Caco-2 (cell line): ENCODE measurements at regions of chr2 and their contacts with region 1.

Region 1: DNA sequence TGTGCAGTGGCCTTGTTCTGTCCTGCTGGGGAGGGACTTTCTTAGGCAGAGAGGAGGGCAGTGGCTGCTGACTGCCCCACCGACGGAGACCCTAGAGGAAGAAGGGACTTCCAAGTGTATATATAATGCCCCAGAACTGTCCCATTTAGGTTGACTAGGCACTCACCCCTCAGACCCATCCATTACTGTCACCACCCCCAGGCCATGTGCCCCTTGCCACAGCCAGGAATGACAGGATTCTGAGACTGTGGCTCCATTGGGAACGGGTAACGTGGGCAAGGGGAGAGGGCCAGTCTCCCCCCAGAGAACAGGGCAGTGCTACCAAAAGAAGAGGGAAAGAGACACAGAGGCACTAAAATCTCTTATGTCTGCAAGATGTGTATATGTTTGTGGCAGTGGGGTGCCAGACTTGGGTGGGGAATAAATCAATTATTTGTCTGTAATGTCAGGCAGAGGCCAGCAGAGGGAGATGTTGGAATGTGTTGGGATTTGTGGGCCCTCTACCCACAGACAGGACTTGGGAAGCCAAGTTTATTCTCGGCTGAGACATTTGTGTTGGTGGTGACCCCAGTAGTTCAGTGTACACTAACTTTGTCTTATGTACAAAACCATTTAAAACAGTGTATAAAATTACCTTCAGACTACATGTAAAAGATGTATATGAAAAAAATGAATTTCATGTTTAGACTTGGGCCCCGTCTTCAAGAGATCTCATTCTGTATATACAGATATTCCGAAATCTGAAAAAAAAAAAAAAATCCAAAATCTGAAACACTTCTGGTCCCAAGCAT is 24.0 kb upstream of the TMEM37 start:
- DNase-seq: peak; percentile 59 to 73
- H3K4me3 ChIP-seq: no peak overlapping the region
- H3K4me3 Mint-ChIP-seq: no peak overlapping the region
- H3K27ac Mint-ChIP-seq: no peak overlapping the region
- H3K4me1 ChIP-seq: peaks cover 6% of the 10 kb centered on the region
- H3K4me1 Mint-ChIP-seq: peaks cover 10% of the 10 kb centered on the region
- H3K27me3 ChIP-seq: no peaks in the 10 kb centered on the region
- H3K27me3 Mint-ChIP-seq: no peaks in the 10 kb centered on the region
- CTCF ChIP-seq: peak; percentile 76 to 94

Region 2: DNA sequence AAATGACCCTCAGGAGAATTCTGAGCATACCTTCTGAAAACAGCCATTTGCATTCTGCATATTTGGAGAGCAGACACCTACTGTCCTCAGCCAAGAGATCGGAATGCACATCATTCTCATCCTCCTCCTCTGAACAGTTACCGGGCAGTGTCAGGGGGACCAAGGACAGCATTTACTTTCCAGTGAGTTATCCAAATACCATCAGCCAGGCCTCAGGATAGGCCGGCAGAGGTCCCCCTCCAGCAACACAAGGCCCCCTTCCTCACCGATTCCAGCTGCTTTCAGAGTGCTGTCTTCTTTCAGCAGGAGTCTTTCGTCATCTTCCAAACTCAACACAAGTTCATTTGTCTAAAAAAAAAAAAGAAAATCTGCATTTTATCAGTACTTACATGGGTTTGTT is 96.3 kb before region 1 on chr2:
- CTCF ChIA-PET with region 1: no interaction called
- POLR2A ChIA-PET with region 1: no interaction called
- intact Hi-C with region 1: loop called (anchors 5 kb)
- DNase-seq: peak in 1 of 2 experiments; percentile 33
- H3K4me3 ChIP-seq: no peak overlapping the region
- H3K4me3 Mint-ChIP-seq: no peak overlapping the region
- H3K27ac Mint-ChIP-seq: no peak overlapping the region
- H3K4me1 ChIP-seq: peaks cover 17% of the 10 kb centered on the region; the same call in 1 of the 2 replicates
- H3K4me1 Mint-ChIP-seq: peaks cover 23% of the 10 kb centered on the region
- H3K27me3 ChIP-seq: no peaks in the 10 kb centered on the region
- H3K27me3 Mint-ChIP-seq: no peaks in the 10 kb centered on the region
- CTCF ChIP-seq: peak in 1 of 2 experiments; percentile 37

Region 3: DNA sequence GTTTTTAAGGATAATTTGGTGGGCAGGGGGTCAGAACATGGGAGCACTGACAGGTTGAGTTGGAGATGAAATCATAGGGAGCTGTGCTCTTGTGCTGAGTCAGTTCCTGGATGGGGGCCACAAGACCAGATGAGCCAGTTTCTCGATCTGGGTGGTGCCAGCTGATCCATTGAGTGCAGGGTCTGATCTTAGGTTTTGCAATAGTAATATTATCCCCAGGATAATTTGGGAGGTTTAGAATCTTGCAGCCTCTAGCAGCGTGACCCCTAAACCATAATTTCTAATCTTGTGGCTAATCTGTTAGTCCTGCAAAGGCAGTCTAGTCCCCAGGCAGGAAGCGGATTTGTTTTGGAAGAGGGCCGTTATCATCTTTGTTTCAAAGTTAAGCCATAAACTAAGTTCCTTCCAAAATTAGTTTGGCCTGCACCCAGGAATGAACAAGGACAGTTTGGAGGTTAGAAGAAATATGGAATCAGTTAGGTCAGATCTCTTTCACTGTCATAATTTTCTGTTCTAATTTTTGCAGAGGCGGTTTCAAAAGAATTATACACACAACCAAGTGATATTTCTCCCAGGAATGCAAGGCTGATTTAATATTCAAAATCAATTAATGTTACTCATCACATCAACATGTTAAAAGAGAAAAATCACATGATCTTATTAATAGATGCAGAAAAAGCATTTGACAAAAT is 17.9 kb before region 1 on chr2:
- CTCF ChIA-PET with region 1: no interaction called
- POLR2A ChIA-PET with region 1: no interaction called
- intact Hi-C with region 1: no loop called
- DNase-seq: no peak
- H3K4me3 ChIP-seq: no peak overlapping the region
- H3K4me3 Mint-ChIP-seq: no peak overlapping the region
- H3K27ac Mint-ChIP-seq: no peak overlapping the region
- H3K4me1 ChIP-seq: peaks cover 9% of the 10 kb centered on the region; the same call in 1 of the 2 replicates
- H3K4me1 Mint-ChIP-seq: peaks cover 7% of the 10 kb centered on the region
- H3K27me3 ChIP-seq: no peaks in the 10 kb centered on the region
- H3K27me3 Mint-ChIP-seq: no peaks in the 10 kb centered on the region
- CTCF ChIP-seq: no peak

Region 4: GRCh38 chr2:119431155-119431975 is 23.7 kb after region 1 on chr2 and contains the start of gene TMEM37:
- CTCF ChIA-PET with region 1: no interaction called
- POLR2A ChIA-PET with region 1: interaction called, 5 read pairs
- intact Hi-C with region 1: loop called (anchors 1 kb)
- DNase-seq: peak; percentile 87 to 90
- H3K4me3 ChIP-seq: peak within 1 kb of the TSS; percentile 63
- H3K4me3 Mint-ChIP-seq: peak within 1 kb of the TSS; percentile 78
- H3K27ac Mint-ChIP-seq: peak within 1 kb of the TSS; percentile 85
- H3K4me1 ChIP-seq: peaks cover 80% of the 10 kb centered on the region
- H3K4me1 Mint-ChIP-seq: peaks cover 53% of the 10 kb centered on the region
- H3K27me3 ChIP-seq: no peaks in the 10 kb centered on the region
- H3K27me3 Mint-ChIP-seq: no peaks in the 10 kb centered on the region
- CTCF ChIP-seq: no peak
- total RNA-seq, gene TMEM37: 13.8 and 15.8 TPM in 2 replicates

Region 5: GRCh38 chr2:119476301-119477021 is 68.8 kb after region 1 on chr2:
- CTCF ChIA-PET with region 1: interaction called, 13 read pairs
- POLR2A ChIA-PET with region 1: no interaction called
- intact Hi-C with region 1: loop called (anchors 1 kb)
- DNase-seq: peak; percentile 76 to 81
- H3K4me3 ChIP-seq: no peak overlapping the region
- H3K4me3 Mint-ChIP-seq: no peak overlapping the region
- H3K27ac Mint-ChIP-seq: peak overlapping the region; percentile 26
- H3K4me1 ChIP-seq: peaks cover 16% of the 10 kb centered on the region
- H3K4me1 Mint-ChIP-seq: peaks cover 8% of the 10 kb centered on the region
- H3K27me3 ChIP-seq: no peaks in the 10 kb centered on the region
- H3K27me3 Mint-ChIP-seq: no peaks in the 10 kb centered on the region
- CTCF ChIP-seq: peak; percentile 94 to 98

Region 6: DNA sequence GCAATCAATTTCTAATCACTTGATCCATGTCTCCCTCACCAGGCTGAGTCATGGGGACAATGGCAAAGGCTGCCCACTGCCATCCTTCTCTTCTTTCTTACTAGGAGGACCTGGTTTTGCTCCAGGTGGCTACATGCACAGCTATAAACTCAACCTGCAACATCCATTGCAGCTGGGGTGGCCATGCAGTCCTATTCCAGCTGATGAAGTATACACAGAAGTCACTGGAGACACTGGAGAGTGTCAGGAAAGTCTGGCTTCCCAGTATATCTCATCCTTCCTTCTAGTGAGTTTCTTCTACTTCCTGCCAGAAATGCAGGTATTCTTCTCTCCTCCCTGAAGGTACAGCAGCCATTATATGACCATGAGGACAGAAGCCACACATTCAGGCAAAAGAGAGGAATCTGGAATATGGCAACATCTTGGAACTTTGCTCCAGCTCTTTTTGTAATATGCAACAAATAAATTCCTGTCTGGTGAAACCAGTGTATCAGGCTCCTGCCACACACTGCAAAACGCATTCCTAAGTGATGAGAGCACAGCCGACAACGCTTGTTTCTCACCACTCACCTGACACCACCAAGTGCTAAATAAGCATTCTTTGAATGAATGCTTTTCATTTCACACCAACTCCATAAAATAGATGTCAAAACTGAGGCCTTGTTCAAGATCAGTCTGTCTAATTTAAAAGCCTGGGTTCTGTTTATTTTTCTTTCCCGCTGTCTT is 84.3 kb after region 1 on chr2:
- CTCF ChIA-PET with region 1: interaction called, 4 read pairs
- POLR2A ChIA-PET with region 1: no interaction called
- intact Hi-C with region 1: loop called (anchors 5 kb)
- DNase-seq: peak; percentile 86 to 92
- H3K4me3 ChIP-seq: no peak overlapping the region
- H3K4me3 Mint-ChIP-seq: peak overlapping the region; percentile 39
- H3K27ac Mint-ChIP-seq: peak overlapping the region; percentile 96
- H3K4me1 ChIP-seq: peaks cover 60% of the 10 kb centered on the region
- H3K4me1 Mint-ChIP-seq: peaks cover 53% of the 10 kb centered on the region
- H3K27me3 ChIP-seq: no peaks in the 10 kb centered on the region
- H3K27me3 Mint-ChIP-seq: no peaks in the 10 kb centered on the region
- CTCF ChIP-seq: no peak

Region 7: DNA sequence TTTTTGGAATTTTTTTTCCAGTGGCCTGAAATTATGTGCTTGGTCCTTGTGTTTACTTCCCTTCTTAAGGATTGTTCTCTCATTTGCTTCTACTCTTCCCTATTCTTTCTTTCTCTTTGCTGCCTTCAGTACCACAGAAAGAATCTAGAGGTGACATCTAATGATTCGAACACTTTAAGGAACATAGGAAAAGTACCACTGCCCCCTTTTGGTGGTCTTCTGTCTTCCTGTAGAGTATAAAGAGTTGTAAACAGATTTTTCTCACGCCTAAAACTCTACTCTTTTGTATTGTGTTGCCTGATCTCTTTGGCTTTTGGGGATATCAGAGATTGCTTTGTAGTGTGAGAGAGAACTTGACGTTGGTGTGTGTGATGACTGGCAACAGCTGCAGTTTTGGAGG is 123.7 kb after region 1 on chr2:
- CTCF ChIA-PET with region 1: interaction called, 3 read pairs
- POLR2A ChIA-PET with region 1: no interaction called
- intact Hi-C with region 1: loop called (anchors 1 kb)
- DNase-seq: peak in 1 of 2 experiments; percentile 29
- H3K4me3 ChIP-seq: no peak overlapping the region
- H3K4me3 Mint-ChIP-seq: no peak overlapping the region
- H3K27ac Mint-ChIP-seq: no peak overlapping the region
- H3K4me1 ChIP-seq: peaks cover 19% of the 10 kb centered on the region
- H3K4me1 Mint-ChIP-seq: peaks cover 18% of the 10 kb centered on the region
- H3K27me3 ChIP-seq: no peaks in the 10 kb centered on the region
- H3K27me3 Mint-ChIP-seq: no peaks in the 10 kb centered on the region
- CTCF ChIP-seq: peak in 1 of 2 experiments; percentile 8

Region 8: GRCh38 chr2:119617455-119617854 is 209.8 kb after region 1 on chr2:
- CTCF ChIA-PET with region 1: no interaction called
- POLR2A ChIA-PET with region 1: no interaction called
- intact Hi-C with region 1: no loop called
- DNase-seq: no peak
- H3K4me3 ChIP-seq: no peak overlapping the region
- H3K4me3 Mint-ChIP-seq: no peak overlapping the region
- H3K27ac Mint-ChIP-seq: no peak overlapping the region
- H3K4me1 ChIP-seq: no peaks in the 10 kb centered on the region; the same call in 1 of the 2 replicates
- H3K4me1 Mint-ChIP-seq: no peaks in the 10 kb centered on the region
- H3K27me3 ChIP-seq: no peaks in the 10 kb centered on the region
- H3K27me3 Mint-ChIP-seq: peaks cover 10% of the 10 kb centered on the region
- CTCF ChIP-seq: no peak

Region 9: DNA sequence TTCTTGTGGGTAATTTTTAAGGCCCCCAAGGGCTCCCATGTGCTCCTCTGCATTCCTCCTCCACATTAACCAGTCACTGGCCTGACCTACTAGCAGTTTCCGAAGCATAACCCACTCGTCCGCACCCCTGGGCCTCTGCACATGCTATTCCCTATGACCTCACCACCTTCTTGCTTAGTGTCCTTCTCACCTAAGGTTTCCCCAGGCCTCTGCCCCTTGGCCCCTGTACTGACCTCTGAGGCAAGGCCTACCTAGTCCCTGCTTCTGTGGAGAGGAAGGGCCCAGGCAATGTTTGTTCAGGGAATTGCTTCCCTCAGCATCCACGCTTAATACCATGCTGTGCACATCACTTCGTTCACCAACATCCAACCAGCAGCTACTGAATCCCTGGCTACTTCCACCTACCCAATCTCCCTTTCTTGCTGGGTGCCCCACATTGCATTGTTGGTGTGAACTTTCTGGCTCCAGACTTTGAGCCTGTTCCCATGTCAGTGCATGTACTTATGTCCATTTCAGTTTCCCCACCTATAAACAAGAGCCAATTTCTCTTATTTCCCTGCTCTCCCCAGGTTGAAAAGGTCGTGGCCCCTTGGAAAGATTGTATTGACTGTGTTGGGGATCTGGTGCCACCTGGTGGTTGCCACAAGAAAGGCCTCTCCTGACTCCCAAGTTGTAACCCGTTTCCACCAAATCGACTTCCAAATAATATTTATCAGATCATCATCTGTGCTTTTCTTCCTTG is 252.1 kb after region 1 on chr2:
- CTCF ChIA-PET with region 1: no interaction called
- POLR2A ChIA-PET with region 1: no interaction called
- intact Hi-C with region 1: loop called (anchors 1 kb)
- DNase-seq: peak in 1 of 2 experiments; percentile 61
- H3K4me3 ChIP-seq: no peak overlapping the region
- H3K4me3 Mint-ChIP-seq: no peak overlapping the region
- H3K27ac Mint-ChIP-seq: no peak overlapping the region
- H3K4me1 ChIP-seq: no peaks in the 10 kb centered on the region
- H3K4me1 Mint-ChIP-seq: no peaks in the 10 kb centered on the region
- H3K27me3 ChIP-seq: no peaks in the 10 kb centered on the region; the same call in 1 of the 2 replicates
- H3K27me3 Mint-ChIP-seq: peaks cover 6% of the 10 kb centered on the region
- CTCF ChIP-seq: peak; percentile 84 to 90